Activated CD4-positive, alpha-beta memory T cell treated with anti-CD3 and anti-CD28 coated beads, Interleukin-2, amount 10 ng/mL, durations not matched to agents 7 days and 5 days (primary cell): ENCODE measurements at regions of chr11 and their contacts with region 1.

Region 1: GRCh38 chr11:14148653-14149273 is 186.2 kb downstream of the SPON1 start:
- DNase-seq: no peak
- H3K4me3 Mint-ChIP-seq: no peak overlapping the region
- H3K27ac Mint-ChIP-seq: no peak overlapping the region
- H3K4me1 Mint-ChIP-seq: peaks cover 3% of the 10 kb centered on the region
- H3K27me3 Mint-ChIP-seq: peaks cover 3% of the 10 kb centered on the region

Region 2: GRCh38 chr11:13955971-13956421 is 192.8 kb before region 1 on chr11:
- CTCF ChIA-PET with region 1: interaction called, 28 read pairs
- POLR2A ChIA-PET with region 1: no interaction called
- DNase-seq: peak; percentile 59
- H3K4me3 Mint-ChIP-seq: no peak overlapping the region
- H3K27ac Mint-ChIP-seq: no peak overlapping the region
- H3K4me1 Mint-ChIP-seq: peaks cover 1% of the 10 kb centered on the region
- H3K27me3 Mint-ChIP-seq: peaks cover 38% of the 10 kb centered on the region

Region 3: GRCh38 chr11:13962562-13963168 is 186.1 kb before region 1 on chr11 and contains the start of gene SPON1:
- CTCF ChIA-PET with region 1: interaction called, 28 read pairs
- POLR2A ChIA-PET with region 1: no interaction called
- DNase-seq: peak; percentile 33
- H3K4me3 Mint-ChIP-seq: peak within 1 kb of the TSS; percentile 47
- H3K27ac Mint-ChIP-seq: no peak within 1 kb of the TSS
- H3K4me1 Mint-ChIP-seq: peaks cover 21% of the 10 kb centered on the region
- H3K27me3 Mint-ChIP-seq: peaks cover 79% of the 10 kb centered on the region
- total RNA-seq, gene SPON1: 0.45 to 0.68 TPM

Region 4: DNA sequence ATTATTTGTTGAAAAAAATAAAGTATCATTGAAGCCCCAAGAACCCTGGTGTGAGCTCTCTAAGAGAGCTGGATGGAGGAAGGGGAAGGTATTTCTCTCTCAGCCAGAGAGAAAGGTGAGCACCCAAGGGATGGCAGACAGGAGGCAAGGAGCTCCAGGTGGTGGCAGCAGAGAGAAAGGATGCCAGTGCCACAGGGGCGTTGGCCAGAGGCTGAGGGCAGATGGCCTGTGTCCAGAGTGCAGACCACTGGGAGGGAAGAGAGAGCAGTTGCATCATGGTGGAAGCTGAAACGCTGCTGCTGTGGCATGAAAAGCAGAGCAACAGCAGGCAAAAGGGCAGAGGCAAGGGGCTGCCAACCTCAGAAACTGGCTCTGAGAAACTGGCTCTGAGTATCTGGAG is 177.8 kb before region 1 on chr11:
- CTCF ChIA-PET with region 1: interaction called, 12 read pairs
- POLR2A ChIA-PET with region 1: no interaction called
- DNase-seq: peak; percentile 22
- H3K4me3 Mint-ChIP-seq: no peak overlapping the region
- H3K27ac Mint-ChIP-seq: no peak overlapping the region
- H3K4me1 Mint-ChIP-seq: peaks cover 22% of the 10 kb centered on the region
- H3K27me3 Mint-ChIP-seq: peaks cover 17% of the 10 kb centered on the region